GM10248 (cell line): ENCODE measurements at regions of chr2 and their contacts with region 1.

Region 1: GRCh38 chr2:178450774-178451525 is at the starts of genes PJVK and PRKRA:
- DNase-seq: peak; percentile 98
- CTCF ChIP-seq: no peak

Region 2: GRCh38 chr2:178386986-178387597 is 63.9 kb before region 1 on chr2:
- CTCF ChIA-PET with region 1: no interaction called
- POLR2A ChIA-PET with region 1: no interaction called
- DNase-seq: no peak
- CTCF ChIP-seq: no peak

Region 3: GRCh38 chr2:178469219-178469849 is 18.4 kb after region 1 on chr2:
- CTCF ChIA-PET with region 1: interaction called, 25 read pairs
- POLR2A ChIA-PET with region 1: no interaction called
- DNase-seq: no peak
- CTCF ChIP-seq: no peak

Region 4: DNA sequence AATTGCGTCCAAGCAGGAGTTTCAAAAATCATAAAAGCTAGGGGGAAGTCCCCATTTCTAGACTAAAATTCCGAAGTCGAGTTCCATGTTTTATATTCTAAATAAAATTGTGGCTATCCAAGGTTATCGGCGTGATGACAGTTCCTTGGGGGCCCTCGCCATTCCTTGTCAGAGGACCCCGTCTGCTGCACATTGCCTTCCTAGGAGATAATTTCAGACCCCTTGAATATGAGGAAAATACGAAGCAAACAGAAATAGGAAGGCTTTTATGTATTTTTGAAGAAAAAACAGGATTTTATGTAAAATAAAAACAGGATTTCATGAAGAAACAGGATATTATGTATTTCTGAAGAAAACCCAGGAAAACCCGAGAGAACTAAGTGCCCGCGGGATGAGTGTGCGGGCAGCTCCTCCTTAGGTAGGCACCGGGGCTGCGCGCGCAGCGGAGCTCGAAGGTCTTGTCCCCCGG is 28.8 kb after region 1 on chr2:
- CTCF ChIA-PET with region 1: no interaction called
- POLR2A ChIA-PET with region 1: no interaction called
- DNase-seq: no peak
- CTCF ChIP-seq: no peak

Region 5: DNA sequence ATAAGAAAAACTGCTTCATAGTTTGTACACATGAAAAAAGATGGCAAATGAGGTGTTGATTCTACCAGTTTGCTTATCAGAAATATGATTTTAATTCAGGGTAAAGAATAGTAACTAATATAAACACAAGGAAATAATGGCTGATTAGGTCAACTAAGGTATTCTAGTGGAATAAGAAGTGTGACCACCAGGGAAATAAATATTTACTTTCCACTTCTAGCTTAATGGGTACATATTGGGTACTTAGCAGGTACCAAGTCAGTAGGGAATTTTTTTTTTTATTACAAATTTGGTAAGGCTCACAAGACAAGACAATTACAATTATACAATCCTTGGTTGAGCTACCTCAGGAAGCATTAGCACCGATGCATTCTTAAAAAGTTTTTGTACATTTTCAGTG is 165.0 kb after region 1 on chr2:
- CTCF ChIA-PET with region 1: no interaction called
- POLR2A ChIA-PET with region 1: no interaction called
- DNase-seq: no peak
- CTCF ChIP-seq: no peak